Activated CD4-positive, alpha-beta memory T cell treated with anti-CD3 and anti-CD28 coated beads for 36 hours (primary cell): ENCODE measurements at regions of chr16 and their contacts with region 1.

Region 1: DNA sequence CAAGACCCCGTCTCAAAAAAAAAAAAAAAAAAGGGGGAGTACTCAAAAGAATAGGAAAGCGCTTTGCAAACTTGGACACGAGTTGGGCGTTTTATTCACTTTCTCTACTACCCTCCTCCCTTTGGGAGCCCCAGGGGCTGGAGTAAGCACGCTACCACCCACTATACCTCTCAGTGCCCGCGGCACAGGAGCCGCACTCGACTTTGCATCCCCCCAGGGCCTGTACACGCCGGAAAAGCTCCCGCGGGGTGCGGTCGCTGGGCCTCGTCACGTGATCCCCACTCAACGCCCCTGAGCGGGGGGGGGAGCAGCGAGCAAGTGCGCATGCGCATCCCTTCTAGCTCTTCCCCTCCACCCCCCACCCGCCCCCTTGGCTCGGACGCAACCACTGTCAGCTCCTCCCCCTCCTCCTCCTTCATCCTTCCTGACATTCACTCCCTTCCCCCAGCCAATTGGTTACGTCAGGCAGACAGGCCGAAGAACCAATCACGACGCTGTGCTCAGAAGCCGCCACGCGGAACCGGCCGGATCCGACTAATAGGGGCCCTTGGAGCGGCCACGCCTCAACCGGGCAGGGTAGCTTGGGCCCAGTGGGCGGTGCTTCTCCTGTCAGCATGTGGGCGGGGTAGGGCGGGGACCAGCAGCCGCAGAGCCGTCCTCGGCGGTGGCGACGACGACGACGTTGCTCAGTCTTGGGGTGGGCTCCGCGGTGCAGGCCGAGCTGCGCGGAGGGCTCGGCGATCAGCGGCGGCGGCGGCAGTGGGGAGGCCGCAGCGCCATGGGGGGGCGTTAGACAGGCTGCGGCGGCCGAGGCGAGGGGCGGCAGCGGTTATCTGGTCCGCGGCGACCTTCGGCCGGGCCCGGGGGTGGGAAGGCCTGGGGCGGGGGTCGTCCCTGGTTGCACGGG is at the start of gene HAPSTR1:
- DNase-seq: peak; percentile 100
- H3K4me3 Mint-ChIP-seq: peak within 1 kb of the TSS; percentile 94
- H3K27ac Mint-ChIP-seq: peak within 1 kb of the TSS; percentile 95
- H3K4me1 Mint-ChIP-seq: peaks cover 29% of the 10 kb centered on the region
- H3K27me3 Mint-ChIP-seq: no peaks in the 10 kb centered on the region
- total RNA-seq, gene HAPSTR1: 47.1 to 49.1 TPM

Region 2: GRCh38 chr16:8963825-8964441 is 127.3 kb before region 1 on chr16 and contains the start of gene USP7:
- CTCF ChIA-PET with region 1: no interaction called
- POLR2A ChIA-PET with region 1: interaction called, 11 read pairs
- intact Hi-C with region 1: loop called (anchors 2 kb)
- DNase-seq: peak; percentile 94
- H3K4me3 Mint-ChIP-seq: peak within 1 kb of the TSS; percentile 84
- H3K27ac Mint-ChIP-seq: peak within 1 kb of the TSS; percentile 94
- H3K4me1 Mint-ChIP-seq: peaks cover 37% of the 10 kb centered on the region
- H3K27me3 Mint-ChIP-seq: peaks cover 2% of the 10 kb centered on the region
- total RNA-seq, gene USP7: 154 to 170 TPM

Region 3: GRCh38 chr16:9125658-9126505 is 34.7 kb after region 1 on chr16:
- CTCF ChIA-PET with region 1: no interaction called
- POLR2A ChIA-PET with region 1: interaction called, 5 read pairs
- intact Hi-C with region 1: loop called (anchors 2 kb)
- DNase-seq: no peak
- H3K4me3 Mint-ChIP-seq: no peak overlapping the region
- H3K27ac Mint-ChIP-seq: peak overlapping the region; percentile 38
- H3K4me1 Mint-ChIP-seq: peaks cover 53% of the 10 kb centered on the region
- H3K27me3 Mint-ChIP-seq: no peaks in the 10 kb centered on the region

Region 4: GRCh38 chr16:9141813-9142212 is 50.6 kb after region 1 on chr16:
- CTCF ChIA-PET with region 1: no interaction called
- POLR2A ChIA-PET with region 1: no interaction called
- intact Hi-C with region 1: no loop called
- DNase-seq: no peak
- H3K4me3 Mint-ChIP-seq: no peak overlapping the region
- H3K27ac Mint-ChIP-seq: no peak overlapping the region
- H3K4me1 Mint-ChIP-seq: peaks cover 9% of the 10 kb centered on the region
- H3K27me3 Mint-ChIP-seq: peaks cover 12% of the 10 kb centered on the region